ENCODE measurements at regions of chr1 and their contacts with region 1.

Region 1: GRCh38 chr1:108643492-108644335 is 17.2 kb downstream of the HENMT1 start:
- DNase-seq: no peak
- ATAC-seq: peak; percentile 63

Region 2: DNA sequence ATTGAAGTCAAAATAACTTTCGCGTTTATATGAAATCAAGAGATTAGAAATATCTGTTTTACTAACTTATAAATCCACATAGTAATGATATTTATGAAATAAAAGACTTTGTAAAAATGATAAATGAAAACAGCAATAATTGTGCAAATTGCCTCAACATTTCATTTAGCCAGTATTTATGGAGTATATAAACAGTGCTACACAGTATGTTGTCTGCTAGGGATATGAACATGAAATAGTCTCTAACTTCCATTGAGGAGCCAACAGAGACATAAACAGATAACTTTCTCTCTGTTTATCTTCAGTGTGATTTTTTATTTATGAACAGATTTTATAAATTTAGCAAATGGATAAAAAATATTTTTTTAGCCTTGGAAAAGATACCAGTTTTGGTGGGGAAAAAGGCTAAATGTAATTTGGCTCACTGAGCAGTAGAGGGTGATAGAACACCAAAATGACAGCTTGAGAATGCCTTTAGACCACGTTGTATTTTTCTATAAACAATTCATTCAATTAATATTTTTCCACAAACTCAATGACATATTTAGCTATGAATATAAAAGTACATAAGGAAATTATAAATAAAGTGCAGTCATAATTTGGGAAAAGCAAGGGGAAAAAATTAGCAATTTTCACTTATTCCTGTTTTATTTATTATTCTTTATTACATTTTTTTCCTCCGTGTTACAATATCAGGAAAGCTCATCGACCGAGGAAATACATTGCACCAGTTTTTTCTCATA is 131.3 kb before region 1 on chr1:
- intact Hi-C with region 1: loop called (anchors 1 kb)
- DNase-seq: no peak
- ATAC-seq: no peak

Region 3: DNA sequence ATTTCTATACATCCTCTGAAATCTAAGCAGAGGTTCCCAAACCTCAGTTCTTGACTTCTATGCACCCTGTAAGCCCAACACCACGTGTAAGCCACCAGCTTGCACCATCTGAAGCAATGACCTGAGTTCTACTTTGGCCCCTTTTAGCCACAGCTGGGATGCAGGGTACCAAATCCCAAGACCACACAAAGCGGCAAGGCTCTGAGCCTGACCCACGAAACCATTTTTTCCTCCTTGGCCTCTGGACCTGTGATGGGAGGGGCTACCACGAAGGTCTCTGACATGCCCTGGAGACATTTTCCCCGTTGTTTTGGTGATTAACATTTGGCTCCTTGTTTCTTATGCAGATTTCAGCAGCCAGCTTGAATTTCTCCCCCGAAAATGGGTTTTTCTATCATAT is 141.6 kb after region 1 on chr1:
- intact Hi-C with region 1: no loop called
- DNase-seq: no peak
- ATAC-seq: no peak

Measured in Right ventricle myocardium inferior (tissue), 1 donor.